Activated naive CD4-positive, alpha-beta T cell treated with anti-CD3 and anti-CD28 coated beads for 36 hours (primary cell): ENCODE measurements at regions of chr10 and their contacts with region 1.

Region 1: GRCh38 chr10:122703439-122704118 is 3.9 kb upstream of the C10orf120 start:
- DNase-seq: peak; percentile 72
- H3K4me3 Mint-ChIP-seq: no peak overlapping the region
- H3K27ac Mint-ChIP-seq: no peak overlapping the region
- H3K4me1 Mint-ChIP-seq: peaks cover 5% of the 10 kb centered on the region
- H3K27me3 Mint-ChIP-seq: no peaks in the 10 kb centered on the region

Region 2: DNA sequence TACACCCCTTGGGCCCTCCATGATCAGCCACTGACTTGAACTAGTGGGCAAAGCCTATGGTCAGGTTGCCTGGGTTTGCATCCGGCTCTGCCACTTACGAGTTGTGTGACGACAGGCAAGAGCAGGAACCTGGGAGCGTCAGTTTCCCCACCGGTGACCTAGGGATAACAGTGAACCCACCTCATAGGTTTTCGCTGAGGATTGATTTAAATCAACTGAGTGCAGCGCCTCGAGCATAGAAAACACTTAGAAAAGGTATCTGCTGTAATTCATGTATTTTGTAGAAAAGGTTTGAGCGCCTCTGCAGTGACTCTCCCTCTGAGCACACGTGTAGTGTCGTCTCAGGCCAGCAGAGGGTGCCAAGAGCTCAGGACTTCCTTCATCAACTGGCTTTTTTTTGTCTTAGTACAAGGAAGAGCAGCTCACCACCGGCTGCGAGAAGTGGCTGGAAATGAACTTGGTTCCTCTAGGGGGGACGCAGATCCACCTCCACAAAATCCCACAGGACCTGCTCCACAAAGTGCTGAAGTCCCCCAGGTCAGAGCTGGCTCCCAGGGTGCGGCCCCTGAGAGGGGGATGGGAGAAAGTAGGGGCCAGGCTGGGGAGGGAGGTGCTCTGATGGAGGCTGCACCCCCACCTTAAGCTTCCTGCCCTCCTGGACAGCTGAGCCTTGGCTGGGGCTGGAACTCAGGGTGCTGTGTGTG is 404.8 kb before region 1 on chr10:
- CTCF ChIA-PET with region 1: no interaction called
- intact Hi-C with region 1: loop called (anchors 1 kb)
- DNase-seq: peak; percentile 82
- H3K4me3 Mint-ChIP-seq: no peak overlapping the region
- H3K27ac Mint-ChIP-seq: no peak overlapping the region
- H3K4me1 Mint-ChIP-seq: peaks cover 3% of the 10 kb centered on the region
- H3K27me3 Mint-ChIP-seq: no peaks in the 10 kb centered on the region

Region 3: GRCh38 chr10:122342293-122343134 is 361.1 kb before region 1 on chr10:
- CTCF ChIA-PET with region 1: no interaction called
- intact Hi-C with region 1: loop called (anchors 2 kb)
- DNase-seq: peak; percentile 80
- H3K4me3 Mint-ChIP-seq: no peak overlapping the region
- H3K27ac Mint-ChIP-seq: peak overlapping the region; percentile 31
- H3K4me1 Mint-ChIP-seq: peaks cover 10% of the 10 kb centered on the region
- H3K27me3 Mint-ChIP-seq: no peaks in the 10 kb centered on the region

Region 4: DNA sequence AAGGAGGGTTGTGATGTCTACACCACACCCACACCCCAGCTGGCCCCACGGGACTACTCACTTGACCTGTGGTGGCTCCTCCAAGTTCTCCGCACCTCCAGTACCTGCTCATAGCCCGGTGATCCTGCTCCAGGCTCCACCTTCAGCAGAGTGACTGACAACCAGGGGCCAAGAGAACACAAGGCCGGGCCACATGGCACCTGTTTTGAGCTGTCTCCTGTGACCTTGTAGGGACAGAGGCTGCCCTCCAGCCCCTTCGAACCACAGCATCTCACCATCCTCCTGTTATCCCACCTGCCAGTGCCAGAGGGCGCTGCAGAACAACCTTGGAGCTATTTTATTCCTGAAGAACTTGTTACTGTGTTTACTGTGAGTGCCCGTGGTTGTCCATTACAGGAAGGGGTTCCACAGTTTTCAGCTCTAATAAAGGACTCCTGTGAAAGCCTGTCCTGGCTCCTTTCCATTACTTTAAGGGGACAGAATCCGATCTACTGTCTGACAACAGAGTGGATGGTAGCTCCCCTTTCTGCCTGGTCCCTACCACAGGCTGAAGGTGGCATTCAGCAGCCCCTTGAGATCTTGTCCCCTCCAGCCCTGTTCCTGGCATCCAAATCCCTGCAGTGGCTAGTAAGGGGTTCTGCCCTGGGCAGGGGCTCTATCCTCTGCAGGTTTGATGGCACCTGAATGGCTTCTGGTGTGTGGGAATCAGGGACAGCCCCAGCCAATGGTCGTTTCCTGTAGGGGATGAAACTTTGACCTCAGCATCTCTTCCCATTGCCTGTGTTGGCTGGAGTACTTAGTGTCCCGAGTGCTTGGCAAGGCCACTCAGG is 54.8 kb before region 1 on chr10:
- CTCF ChIA-PET with region 1: interaction called, 4 read pairs
- intact Hi-C with region 1: loop called (anchors 1 kb)
- DNase-seq: peak; percentile 59
- H3K4me3 Mint-ChIP-seq: no peak overlapping the region
- H3K27ac Mint-ChIP-seq: no peak overlapping the region
- H3K4me1 Mint-ChIP-seq: no peaks in the 10 kb centered on the region
- H3K27me3 Mint-ChIP-seq: peaks cover 19% of the 10 kb centered on the region